HCT116 (cell line): ENCODE measurements at regions of chr1 and their contacts with region 1.

Region 1: DNA sequence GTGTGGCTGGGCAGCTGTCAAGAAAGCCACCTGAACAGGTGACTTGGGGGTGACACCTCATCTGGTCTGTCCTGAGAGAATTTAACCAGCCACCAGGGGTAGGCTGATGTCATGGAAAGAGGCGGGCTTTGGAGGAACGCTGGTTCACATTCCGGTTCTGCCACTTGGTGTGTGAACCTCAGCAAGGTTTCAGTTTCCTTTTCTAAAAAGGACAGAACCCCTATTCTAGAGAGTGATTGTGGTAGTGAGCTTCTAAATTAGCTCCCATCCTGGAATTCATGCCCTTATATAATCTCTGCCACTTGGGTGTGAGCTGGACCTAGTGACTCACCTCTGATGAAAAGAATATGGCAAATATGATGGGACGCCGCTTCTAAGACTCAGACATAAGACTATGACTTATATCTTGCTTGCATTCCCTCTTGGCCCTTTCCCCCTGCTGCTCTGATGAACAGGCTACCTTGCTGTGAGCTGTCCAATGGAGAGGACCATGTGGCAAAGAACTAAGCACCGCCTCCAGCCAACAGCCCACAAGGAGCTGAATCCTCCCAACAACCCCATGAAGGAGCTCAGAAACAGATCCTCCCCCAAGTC is 332.1 kb downstream of the RRAGC start:
- DNase-seq: peak; percentile 37
- ATAC-seq: peak; percentile 83
- H3K4me3 ChIP-seq: peak overlapping the region; percentile 27 to 37
- H3K27ac ChIP-seq: no peak overlapping the region
- H3K4me1 ChIP-seq: peaks cover 0 to 10% of the 10 kb centered on the region in 2 experiments; a peak in 2 of 4 replicates
- H3K27me3 ChIP-seq: peaks cover 21% of the 10 kb centered on the region; the same call in 1 of the 2 replicates
- CTCF ChIP-seq: no peak; a peak in 1 of 6 replicates
- POLR2A ChIP-seq: no peak
- RAD21 ChIP-seq: no peak

Region 2: DNA sequence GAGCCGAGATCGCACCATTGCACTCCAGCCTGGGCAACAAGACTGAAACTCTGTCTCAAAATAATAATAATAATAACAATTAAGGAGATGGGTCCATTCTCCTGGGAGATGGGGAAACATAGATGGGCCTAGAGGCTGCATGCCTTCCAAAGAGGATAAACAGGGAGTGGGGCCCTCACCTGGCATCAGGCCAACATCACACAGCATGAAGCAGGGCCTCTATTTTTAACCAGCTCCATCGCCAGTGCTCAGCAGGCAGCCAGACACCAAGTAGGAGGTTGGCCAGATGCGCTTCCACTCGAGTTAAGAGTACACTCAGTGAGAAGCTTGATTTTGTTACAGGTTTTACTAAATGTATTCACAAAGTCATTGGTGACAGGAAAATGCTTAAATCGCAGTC is 19.9 kb before region 1 on chr1:
- CTCF ChIA-PET with region 1: no interaction called
- POLR2A ChIA-PET with region 1: no interaction called
- RAD21 ChIA-PET with region 1: no interaction called
- intact Hi-C with region 1: loop called (anchors 2 kb)
- DNase-seq: no peak
- ATAC-seq: no peak
- H3K4me3 ChIP-seq: no peak overlapping the region
- H3K27ac ChIP-seq: no peak overlapping the region
- H3K4me1 ChIP-seq: no peaks in the 10 kb centered on the region
- H3K27me3 ChIP-seq: peaks cover 75% of the 10 kb centered on the region
- CTCF ChIP-seq: no peak
- POLR2A ChIP-seq: no peak
- RAD21 ChIP-seq: no peak

Region 3: GRCh38 chr1:38834937-38835827 is 307.7 kb after region 1 on chr1:
- CTCF ChIA-PET with region 1: interaction called, 5 read pairs
- POLR2A ChIA-PET with region 1: no interaction called
- RAD21 ChIA-PET with region 1: no interaction called
- intact Hi-C with region 1: loop called (anchors 10 kb)
- DNase-seq: peak; percentile 81
- ATAC-seq: peak; percentile 97
- H3K4me3 ChIP-seq: no peak overlapping the region
- H3K27ac ChIP-seq: no peak overlapping the region
- H3K4me1 ChIP-seq: no peaks in the 10 kb centered on the region
- H3K27me3 ChIP-seq: no peaks in the 10 kb centered on the region
- CTCF ChIP-seq: peak; percentile 68 to 86 (median 70)
- POLR2A ChIP-seq: no peak
- RAD21 ChIP-seq: peak; percentile 92

Region 4: DNA sequence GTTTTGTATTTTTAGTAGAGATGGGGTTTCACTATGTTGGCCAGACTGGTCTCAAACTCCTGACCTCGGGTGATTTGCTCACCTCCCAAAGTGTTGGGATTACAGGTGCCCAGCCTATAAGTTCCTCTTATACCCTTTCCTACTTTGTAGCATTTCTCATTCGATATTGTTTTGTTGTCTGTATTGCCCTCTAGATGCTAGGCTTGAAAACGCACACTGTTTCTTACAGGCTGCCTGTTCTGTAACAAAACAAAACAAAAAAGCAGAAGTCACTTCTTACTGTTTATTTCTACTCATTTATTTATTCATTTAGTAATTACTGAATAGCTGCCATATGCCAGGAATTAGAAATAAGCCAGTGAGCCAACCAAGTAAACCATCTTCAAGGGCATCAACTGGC is 827.1 kb after region 1 on chr1:
- CTCF ChIA-PET with region 1: no interaction called
- POLR2A ChIA-PET with region 1: no interaction called
- RAD21 ChIA-PET with region 1: no interaction called
- intact Hi-C with region 1: no loop called
- DNase-seq: no peak
- ATAC-seq: no peak
- H3K4me3 ChIP-seq: no peak overlapping the region
- H3K27ac ChIP-seq: no peak overlapping the region
- H3K4me1 ChIP-seq: no peaks in the 10 kb centered on the region
- H3K27me3 ChIP-seq: no peaks in the 10 kb centered on the region
- CTCF ChIP-seq: 0 out of 6 replicates have a peak, but pooled peaks of 2 of the 3 experiments have one; percentile 5 to 15
- POLR2A ChIP-seq: no peak
- RAD21 ChIP-seq: peak; percentile 11; the same call in 1 of the 2 replicates